WTC11 (cell line): ENCODE measurements at regions of chr21 and their contacts with region 1.

Region 1: DNA sequence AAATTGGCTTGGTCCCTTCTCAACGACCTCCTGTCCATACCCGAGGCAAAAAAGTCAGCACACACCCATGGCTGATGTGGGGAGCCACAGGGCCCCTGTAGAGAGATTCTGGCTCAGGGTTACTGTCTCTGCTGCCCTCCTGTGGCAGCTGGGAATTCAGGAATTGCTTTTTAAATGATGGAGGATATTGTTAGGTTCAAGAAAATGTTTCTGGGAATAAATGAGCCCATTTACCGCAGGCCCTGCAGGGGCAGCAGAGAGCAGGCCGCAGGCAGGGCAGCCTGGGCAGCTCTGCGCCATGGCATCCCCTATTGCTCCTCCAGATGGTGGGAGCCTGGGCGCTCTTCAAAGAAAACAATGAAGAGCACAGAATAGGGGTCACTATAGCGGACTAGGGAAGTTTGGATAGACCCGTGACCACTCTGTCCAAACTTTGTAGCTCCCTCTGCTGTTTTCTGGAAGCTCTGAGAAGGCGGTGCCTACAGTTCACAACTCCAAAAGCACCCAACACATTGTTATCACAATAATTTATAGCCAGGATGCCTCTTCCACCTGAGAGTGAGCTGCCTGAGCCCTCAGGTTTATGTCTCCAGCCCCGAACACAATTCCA is 201.1 kb downstream of the BACH1 start:
- DNase-seq: peak; percentile 74
- ATAC-seq: peak; percentile 97
- H3K4me3 Mint-ChIP-seq: no peak overlapping the region
- H3K27ac Mint-ChIP-seq: no peak overlapping the region
- H3K4me1 Mint-ChIP-seq: no peaks in the 10 kb centered on the region
- H3K27me3 Mint-ChIP-seq: no peaks in the 10 kb centered on the region
- CTCF ChIP-seq: peak; percentile 83

Region 2: DNA sequence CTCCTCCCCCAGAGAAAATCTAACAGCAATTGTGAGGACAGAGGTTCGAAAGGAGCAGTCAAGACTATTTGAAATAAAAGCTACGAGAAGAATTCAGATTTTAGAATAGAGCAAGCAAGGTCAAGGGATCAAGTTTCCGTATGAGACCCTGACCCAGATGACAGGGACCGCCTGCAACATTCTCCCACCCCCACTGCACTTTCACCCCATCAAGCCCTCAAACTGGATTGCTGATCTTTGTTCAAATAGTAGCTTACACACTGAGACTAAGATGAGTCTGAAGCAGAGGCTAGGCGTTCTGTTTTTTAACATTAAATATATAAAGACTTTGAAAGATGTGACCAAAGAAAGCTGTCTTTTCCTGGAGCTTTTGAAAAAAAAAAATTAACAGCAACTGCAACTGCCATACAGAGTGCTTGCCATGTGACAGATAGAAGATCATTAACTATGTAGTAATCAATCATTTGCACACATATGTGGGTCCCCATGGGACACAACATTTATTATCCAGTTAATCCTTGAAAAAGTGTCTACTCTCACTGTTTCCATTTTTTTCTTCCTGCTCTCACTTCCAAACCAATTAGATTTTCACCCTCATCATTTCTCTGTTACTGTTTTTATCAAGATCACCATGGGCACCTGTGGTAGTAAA is 320.0 kb after region 1 on chr21:
- CTCF ChIA-PET with region 1: no interaction called
- POLR2A ChIA-PET with region 1: no interaction called
- DNase-seq: no peak
- ATAC-seq: no peak
- H3K4me3 Mint-ChIP-seq: no peak overlapping the region
- H3K27ac Mint-ChIP-seq: no peak overlapping the region
- H3K4me1 Mint-ChIP-seq: peaks cover 16% of the 10 kb centered on the region
- H3K27me3 Mint-ChIP-seq: no peaks in the 10 kb centered on the region
- CTCF ChIP-seq: no peak

Region 3: DNA sequence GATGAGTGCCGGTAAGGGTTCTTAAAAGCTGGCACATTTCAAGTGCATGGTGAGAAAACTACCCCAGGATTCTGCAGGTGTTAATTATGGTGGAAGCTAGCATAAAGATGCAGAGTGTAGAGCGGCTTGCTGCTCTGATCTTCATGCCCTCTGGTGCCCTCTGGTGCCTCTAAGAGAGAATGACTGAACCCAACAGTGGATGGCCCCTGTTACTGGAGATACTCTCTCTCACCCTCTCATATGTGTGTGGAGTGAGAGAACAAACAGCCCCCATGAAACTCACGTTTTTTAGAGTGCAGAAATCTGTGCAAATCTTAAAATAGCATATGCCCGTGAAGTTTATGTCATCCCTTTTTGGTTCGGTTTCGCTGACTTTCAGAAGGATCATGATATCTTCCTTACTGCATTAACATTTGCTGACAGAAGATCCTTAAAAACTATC is 349.9 kb after region 1 on chr21:
- CTCF ChIA-PET with region 1: interaction called, 14 read pairs
- POLR2A ChIA-PET with region 1: no interaction called
- DNase-seq: peak; percentile 52
- ATAC-seq: peak; percentile 100
- H3K4me3 Mint-ChIP-seq: no peak overlapping the region
- H3K27ac Mint-ChIP-seq: no peak overlapping the region
- H3K4me1 Mint-ChIP-seq: peaks cover 15% of the 10 kb centered on the region
- H3K27me3 Mint-ChIP-seq: no peaks in the 10 kb centered on the region
- CTCF ChIP-seq: peak; percentile 68